Breast epithelium (tissue), 4 donors: ENCODE measurements at regions of chr15 and their contacts with region 1.

Region 1: GRCh38 chr15:33159726-33160453 is 34.6 kb downstream of the FMN1 start:
- DNase-seq: no peak
- H3K4me3 ChIP-seq: no peak overlapping the region
- H3K27ac ChIP-seq: no peak overlapping the region
- H3K4me1 ChIP-seq: no peaks in the 10 kb centered on the region
- H3K27me3 ChIP-seq: no peaks in the 10 kb centered on the region
- CTCF ChIP-seq: no peak
- POLR2A ChIP-seq: no peak

Region 2: GRCh38 chr15:33959844-33960548 is 800.1 kb after region 1 on chr15:
- intact Hi-C with region 1: loop called (anchors 5 kb)
- DNase-seq: no peak
- H3K4me3 ChIP-seq: no peak overlapping the region
- H3K27ac ChIP-seq: no peak overlapping the region
- H3K4me1 ChIP-seq: no peaks in the 10 kb centered on the region
- H3K27me3 ChIP-seq: no peaks in the 10 kb centered on the region
- CTCF ChIP-seq: no peak
- POLR2A ChIP-seq: no peak